SK-N-SH (cell line): ENCODE measurements at regions of chr1 and their contacts with region 1.

Region 1: DNA sequence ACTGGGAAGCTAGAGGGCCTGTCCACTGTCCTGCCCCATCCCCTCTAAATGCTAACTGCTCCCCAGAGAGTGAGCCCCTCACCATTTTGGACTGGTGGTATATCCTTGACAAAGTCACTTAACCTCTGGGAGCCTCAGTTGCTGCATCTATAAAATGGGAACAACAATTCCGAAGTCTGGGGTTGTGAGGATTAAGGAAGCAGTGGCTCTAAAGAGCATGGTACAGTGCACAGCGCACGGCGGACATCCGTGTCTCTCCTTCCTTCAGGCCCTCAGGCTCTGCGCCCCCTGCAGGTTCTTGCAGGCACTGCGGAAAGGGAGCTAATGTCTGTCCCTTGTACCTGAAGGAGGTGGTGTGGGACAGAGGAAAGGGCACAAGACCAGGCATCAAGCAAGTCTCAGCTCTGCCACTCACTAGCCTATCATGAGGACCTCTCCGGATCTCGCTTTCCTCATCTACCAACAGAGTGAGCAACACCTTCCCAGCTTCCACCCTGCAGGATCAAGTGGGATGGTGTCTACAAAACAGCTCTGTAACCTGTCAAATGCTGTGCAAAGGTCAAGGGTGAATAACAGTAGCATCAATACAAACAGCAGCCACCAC is 20.1 kb downstream of the ECE1 start:
- DNase-seq: peak; percentile 75
- H3K4me3 ChIP-seq: no peak overlapping the region; a peak in 1 of 4 replicates
- H3K27ac ChIP-seq: peak overlapping the region in 1 of 2 experiments; percentile 59; a peak in 1 of 4 replicates
- H3K4me1 ChIP-seq: peaks cover 0 to 44% of the 10 kb centered on the region in 2 experiments; a peak in 1 of 4 replicates
- H3K27me3 ChIP-seq: no peaks in the 10 kb centered on the region
- CTCF ChIP-seq: peak; percentile 92
- EP300 ChIP-seq: no peak
- RAD21 ChIP-seq: peak; percentile 62

Region 2: GRCh38 chr1:21077085-21077484 is 193.1 kb before region 1 on chr1:
- CTCF ChIA-PET with region 1: no interaction called
- POLR2A ChIA-PET with region 1: no interaction called
- DNase-seq: no peak
- H3K4me3 ChIP-seq: no peak overlapping the region
- H3K27ac ChIP-seq: peak overlapping the region in 1 of 2 experiments; percentile 56; a peak in 1 of 4 replicates
- H3K4me1 ChIP-seq: peaks cover 3 to 17% of the 10 kb centered on the region in 2 experiments; a peak in 2 of 4 replicates
- H3K27me3 ChIP-seq: no peaks in the 10 kb centered on the region
- CTCF ChIP-seq: no peak
- EP300 ChIP-seq: no peak
- RAD21 ChIP-seq: no peak

Region 3: GRCh38 chr1:21232044-21232443 is 38.1 kb before region 1 on chr1:
- CTCF ChIA-PET with region 1: interaction called, 27 read pairs
- POLR2A ChIA-PET with region 1: no interaction called
- DNase-seq: peak; percentile 81
- H3K4me3 ChIP-seq: no peak overlapping the region
- H3K27ac ChIP-seq: no peak overlapping the region
- H3K4me1 ChIP-seq: no peaks in the 10 kb centered on the region
- H3K27me3 ChIP-seq: no peaks in the 10 kb centered on the region
- CTCF ChIP-seq: peak; percentile 84
- EP300 ChIP-seq: no peak
- RAD21 ChIP-seq: peak; percentile 93

Region 4: DNA sequence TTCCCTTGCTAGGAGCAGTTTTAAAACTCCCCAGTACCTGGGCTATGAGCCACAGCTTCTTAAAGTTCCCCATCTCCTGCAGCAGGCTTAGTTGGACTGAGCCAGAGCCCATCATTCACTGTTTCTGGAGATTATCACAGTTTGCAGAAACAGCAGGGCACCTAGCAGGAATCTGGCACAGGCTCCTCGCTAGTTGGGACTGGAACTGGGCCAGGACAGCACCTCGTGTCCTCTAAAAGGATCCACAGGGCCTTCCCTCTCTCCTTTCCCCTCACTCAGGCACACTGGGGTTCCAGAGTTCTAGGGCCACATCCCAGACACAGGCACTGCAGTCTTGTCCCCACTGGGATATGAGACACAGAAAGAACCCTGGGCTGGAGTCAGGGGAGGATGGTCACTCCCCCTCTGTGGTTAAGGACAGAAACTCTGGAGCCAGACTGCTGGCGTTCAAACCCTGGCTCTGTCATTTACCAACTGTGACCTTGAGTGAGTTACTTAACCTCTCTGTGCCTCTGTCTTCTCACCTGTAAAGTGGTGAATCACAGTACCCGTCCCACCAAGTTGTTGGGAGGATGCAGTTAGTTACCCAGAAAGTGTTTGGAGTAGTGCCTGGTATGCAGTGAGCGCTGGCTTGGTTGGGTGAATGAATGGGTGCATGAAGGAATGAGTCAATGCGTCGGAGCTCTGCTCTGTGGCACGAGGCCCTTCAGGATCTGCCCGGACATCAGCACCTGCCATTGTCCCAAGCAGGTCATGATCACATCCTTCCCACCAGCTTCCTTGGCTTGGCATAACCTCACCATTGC is 38.9 kb after region 1 on chr1:
- CTCF ChIA-PET with region 1: interaction called, 32 read pairs
- POLR2A ChIA-PET with region 1: no interaction called
- DNase-seq: peak; percentile 60
- H3K4me3 ChIP-seq: no peak overlapping the region
- H3K27ac ChIP-seq: peak overlapping the region; percentile 24 to 99; a peak in 3 of 4 replicates
- H3K4me1 ChIP-seq: peaks cover 49 to 83% of the 10 kb centered on the region in 2 experiments
- H3K27me3 ChIP-seq: no peaks in the 10 kb centered on the region
- CTCF ChIP-seq: no peak
- EP300 ChIP-seq: peak in 1 of 2 experiments; percentile 84; a peak in 2 of 4 replicates
- RAD21 ChIP-seq: 0 out of 2 replicates have a peak, but pooled peaks have one; percentile 6

Region 5: DNA sequence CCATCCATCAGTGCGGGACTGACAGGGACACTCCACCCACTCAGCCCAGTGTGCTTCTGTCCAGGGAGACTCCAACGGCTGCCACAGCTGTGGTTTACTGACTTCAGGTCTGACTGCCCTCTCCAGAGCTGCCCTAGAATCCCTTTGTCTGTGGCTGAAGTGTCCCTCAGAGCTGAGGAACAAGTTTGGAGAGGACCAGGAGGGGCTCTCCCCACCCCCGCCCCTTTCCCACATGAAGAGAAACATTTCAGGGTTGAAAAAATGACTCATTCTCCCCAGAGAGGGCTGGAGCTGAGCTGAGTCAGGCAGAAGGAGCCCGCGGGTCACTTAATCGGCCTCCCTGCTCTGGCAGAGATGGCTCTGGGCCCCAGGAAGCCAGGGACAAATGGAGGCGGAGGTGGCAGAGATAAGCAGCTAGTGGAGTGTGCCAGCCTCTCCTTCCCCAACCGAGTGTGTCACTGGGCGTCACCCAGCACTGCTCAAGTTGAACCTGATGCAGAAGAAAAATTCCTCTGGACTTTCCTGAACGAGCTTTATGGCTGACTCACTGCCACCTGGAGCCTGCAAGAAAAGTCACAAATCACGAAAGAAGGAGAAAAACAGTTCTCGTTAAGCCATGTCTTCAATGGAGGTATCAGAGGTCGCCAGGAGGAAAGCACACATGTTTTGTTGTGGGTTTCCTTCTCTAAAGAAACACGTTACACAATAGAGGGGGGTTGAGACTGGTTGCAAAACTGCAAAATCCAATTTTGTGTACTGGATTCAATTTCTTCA is 54.4 kb after region 1 on chr1:
- CTCF ChIA-PET with region 1: interaction called, 30 read pairs
- POLR2A ChIA-PET with region 1: no interaction called
- DNase-seq: peak; percentile 76
- H3K4me3 ChIP-seq: no peak overlapping the region
- H3K27ac ChIP-seq: peak overlapping the region; percentile 87 to 94
- H3K4me1 ChIP-seq: peaks cover 43 to 73% of the 10 kb centered on the region in 2 experiments
- H3K27me3 ChIP-seq: no peaks in the 10 kb centered on the region
- CTCF ChIP-seq: no peak
- EP300 ChIP-seq: peak in 1 of 2 experiments; percentile 72; a peak in 1 of 4 replicates
- RAD21 ChIP-seq: peak; percentile 30

Region 6: GRCh38 chr1:21344750-21345443 is 74.7 kb after region 1 on chr1:
- CTCF ChIA-PET with region 1: interaction called, 13 read pairs
- POLR2A ChIA-PET with region 1: no interaction called
- DNase-seq: peak; percentile 60
- H3K4me3 ChIP-seq: peak overlapping the region; percentile 73 to 78
- H3K27ac ChIP-seq: peak overlapping the region in 1 of 2 experiments; percentile 65; a peak in 1 of 4 replicates
- H3K4me1 ChIP-seq: peaks cover 0 to 48% of the 10 kb centered on the region in 2 experiments; a peak in 1 of 4 replicates
- H3K27me3 ChIP-seq: no peaks in the 10 kb centered on the region; the same call in 1 of the 2 replicates
- CTCF ChIP-seq: no peak
- EP300 ChIP-seq: no peak
- RAD21 ChIP-seq: no peak